GM18951 (cell line): ENCODE measurements at regions of chr1 and their contacts with region 1.

Region 1: DNA sequence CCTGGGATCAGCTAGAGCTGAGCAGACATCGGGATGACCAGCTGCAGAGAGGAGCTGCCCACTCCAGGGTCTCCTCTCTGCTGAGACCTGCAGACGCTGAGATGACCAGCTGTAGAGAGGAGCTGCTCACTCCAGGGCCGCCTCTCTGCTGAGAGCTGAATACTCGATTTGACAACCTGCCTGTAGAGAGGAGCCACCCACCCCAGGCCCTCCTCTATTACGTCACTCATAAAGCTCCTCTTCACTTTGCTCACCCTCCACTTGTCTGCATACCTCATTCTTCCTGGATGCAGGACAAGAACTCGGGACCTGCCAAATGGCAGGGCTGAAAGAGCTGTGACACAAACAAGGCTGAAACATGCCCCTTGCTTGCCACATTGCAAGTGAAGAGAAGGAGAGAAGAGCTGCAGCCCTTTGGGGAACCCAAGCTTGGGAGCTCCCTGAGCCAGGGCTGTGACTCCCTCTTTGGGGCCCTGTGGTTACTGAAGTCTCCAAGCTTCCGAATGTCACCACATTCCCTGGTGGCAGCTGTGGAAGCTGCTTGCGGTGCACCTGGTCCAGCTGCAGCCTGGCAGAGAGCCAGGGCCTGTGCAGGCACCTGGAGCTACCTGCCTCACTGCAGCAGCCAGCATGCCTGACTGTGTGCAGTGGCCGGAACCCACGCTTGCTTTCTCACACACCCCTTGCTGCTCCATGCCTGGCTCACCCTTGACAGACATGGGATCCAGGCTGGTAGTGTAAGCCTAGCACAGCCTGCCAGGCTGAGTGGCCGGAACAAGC is 59.6 kb downstream of the CC2D1B start:
- POLR2A ChIP-seq: no peak

Region 2: GRCh38 chr1:52056163-52056936 is 250.1 kb before region 1 on chr1 and contains the start of gene BTF3L4:
- in situ Hi-C with region 1: no loop called
- POLR2A ChIP-seq: peak; percentile 67

Region 3: DNA sequence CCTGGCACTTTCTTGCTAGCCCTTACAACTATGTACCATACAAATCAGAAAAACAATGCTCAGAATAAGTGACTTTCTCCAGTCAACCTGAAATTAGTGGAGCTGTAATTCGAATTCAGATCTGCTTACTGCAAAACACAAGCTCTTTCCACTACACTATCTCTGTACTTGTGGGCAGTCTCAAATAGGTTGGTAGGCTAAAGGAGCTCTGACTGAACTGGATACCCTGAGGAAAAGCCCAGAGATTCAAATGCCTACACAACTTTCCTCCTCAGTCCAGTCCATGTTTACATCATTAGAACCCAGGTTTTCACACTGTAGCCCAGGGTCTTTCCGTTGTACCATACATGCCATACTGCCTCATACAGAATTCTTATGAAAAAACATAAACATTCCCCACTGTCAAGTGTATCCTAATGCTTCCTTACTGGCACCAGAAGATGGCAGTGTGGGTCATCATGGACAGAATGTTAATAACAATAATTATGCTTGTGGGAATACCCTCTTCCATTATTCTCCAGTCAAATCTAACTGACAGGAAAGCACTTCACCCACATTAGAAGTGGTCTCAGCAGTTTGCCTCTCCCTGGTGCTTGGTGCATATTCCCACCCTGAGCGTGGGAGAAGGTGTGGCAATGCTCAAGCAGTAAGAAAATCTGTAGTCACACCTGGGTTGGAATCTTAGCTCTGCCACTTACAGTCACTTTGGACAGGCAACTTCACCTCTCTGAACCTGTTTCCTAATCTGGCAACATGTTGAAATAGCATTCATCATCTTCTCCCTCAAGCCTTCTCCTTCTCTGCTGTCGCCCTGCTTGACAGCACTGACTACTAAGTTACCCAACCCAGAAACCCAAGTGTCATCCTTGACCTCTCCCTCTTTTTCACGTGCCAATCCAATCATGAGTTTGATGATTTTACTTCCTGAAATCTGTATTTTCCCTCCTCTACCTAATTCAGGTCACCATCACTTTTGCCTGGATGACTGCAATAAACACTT is 178.9 kb before region 1 on chr1:
- in situ Hi-C with region 1: loop called (anchors 10 kb)
- POLR2A ChIP-seq: no peak

Region 4: GRCh38 chr1:52235646-52236045 is 70.8 kb before region 1 on chr1:
- in situ Hi-C with region 1: no loop called
- POLR2A ChIP-seq: no peak